CD8-positive, alpha-beta T cell (primary cell): ENCODE measurements at regions of chr3 and their contacts with region 1.

Region 1: GRCh38 chr3:129052675-129053074 is 7.9 kb upstream of the GP9 start:
- DNase-seq: no peak
- ATAC-seq: no peak
- H3K4me3 ChIP-seq: no peak overlapping the region
- H3K4me3 Mint-ChIP-seq: no peak overlapping the region
- H3K27ac ChIP-seq: no peak overlapping the region
- H3K27ac Mint-ChIP-seq: no peak overlapping the region
- H3K4me1 ChIP-seq: peaks cover 4% of the 10 kb centered on the region
- H3K4me1 Mint-ChIP-seq: peaks cover 10% of the 10 kb centered on the region
- H3K27me3 ChIP-seq: no peaks in the 10 kb centered on the region
- H3K27me3 Mint-ChIP-seq: no peaks in the 10 kb centered on the region
- CTCF ChIP-seq: no peak

Region 2: GRCh38 chr3:128922804-128923459 is 129.7 kb before region 1 on chr3:
- CTCF ChIA-PET with region 1: no interaction called
- POLR2A ChIA-PET with region 1: no interaction called
- intact Hi-C with region 1: no loop called
- DNase-seq: peak; percentile 16 to 83 (median 58)
- ATAC-seq: peak; percentile 85
- H3K4me3 ChIP-seq: peak overlapping the region; percentile 34 to 37
- H3K4me3 Mint-ChIP-seq: peak overlapping the region; percentile 84
- H3K27ac ChIP-seq: peak overlapping the region; percentile 34 to 52
- H3K27ac Mint-ChIP-seq: peak overlapping the region; percentile 90
- H3K4me1 ChIP-seq: peaks cover 19% of the 10 kb centered on the region
- H3K4me1 Mint-ChIP-seq: peaks cover 36% of the 10 kb centered on the region
- H3K27me3 ChIP-seq: no peaks in the 10 kb centered on the region
- H3K27me3 Mint-ChIP-seq: no peaks in the 10 kb centered on the region
- CTCF ChIP-seq: no peak

Region 3: DNA sequence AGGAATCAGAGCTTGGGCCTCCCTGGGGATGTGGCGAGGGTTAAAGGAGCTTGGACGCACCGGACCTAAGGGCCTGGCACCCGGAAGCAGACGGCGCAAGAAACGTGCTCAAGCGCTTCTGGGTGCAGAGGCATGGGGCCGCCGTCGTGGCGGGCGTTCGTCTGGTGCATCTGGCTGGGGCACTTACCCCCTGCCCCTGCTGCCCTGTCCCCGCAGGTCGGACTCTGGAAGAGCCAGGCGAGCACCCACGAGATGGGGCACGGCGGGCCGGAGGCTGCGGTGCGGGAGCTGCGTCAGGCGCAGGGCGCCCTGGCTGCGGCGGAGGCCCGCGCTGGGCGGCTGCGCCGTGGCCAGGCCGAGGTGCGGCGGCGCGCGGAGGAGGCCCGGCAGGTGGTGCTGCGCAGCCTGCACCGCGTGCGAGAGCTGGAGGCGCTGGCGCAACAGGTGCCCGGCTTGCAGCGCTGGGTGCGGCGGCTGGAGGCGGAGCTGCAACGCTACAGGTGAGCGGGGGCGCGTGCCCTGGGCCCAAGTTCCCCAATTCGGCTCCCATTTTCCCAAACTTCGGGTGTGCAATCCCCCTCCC is 49.0 kb before region 1 on chr3:
- CTCF ChIA-PET with region 1: interaction called, 23 read pairs
- POLR2A ChIA-PET with region 1: no interaction called
- intact Hi-C with region 1: no loop called
- DNase-seq: peak in 8 of 9 experiments; percentile 38 to 82 (median 60)
- ATAC-seq: peak; percentile 92
- H3K4me3 ChIP-seq: peak overlapping the region in 1 of 2 experiments; percentile 12
- H3K4me3 Mint-ChIP-seq: peak overlapping the region; percentile 70
- H3K27ac ChIP-seq: no peak overlapping the region
- H3K27ac Mint-ChIP-seq: no peak overlapping the region
- H3K4me1 ChIP-seq: peaks cover 43% of the 10 kb centered on the region
- H3K4me1 Mint-ChIP-seq: peaks cover 43% of the 10 kb centered on the region
- H3K27me3 ChIP-seq: peaks cover 5 to 23% of the 10 kb centered on the region in 2 experiments
- H3K27me3 Mint-ChIP-seq: peaks cover 21% of the 10 kb centered on the region
- CTCF ChIP-seq: peak; percentile 34

Region 4: DNA sequence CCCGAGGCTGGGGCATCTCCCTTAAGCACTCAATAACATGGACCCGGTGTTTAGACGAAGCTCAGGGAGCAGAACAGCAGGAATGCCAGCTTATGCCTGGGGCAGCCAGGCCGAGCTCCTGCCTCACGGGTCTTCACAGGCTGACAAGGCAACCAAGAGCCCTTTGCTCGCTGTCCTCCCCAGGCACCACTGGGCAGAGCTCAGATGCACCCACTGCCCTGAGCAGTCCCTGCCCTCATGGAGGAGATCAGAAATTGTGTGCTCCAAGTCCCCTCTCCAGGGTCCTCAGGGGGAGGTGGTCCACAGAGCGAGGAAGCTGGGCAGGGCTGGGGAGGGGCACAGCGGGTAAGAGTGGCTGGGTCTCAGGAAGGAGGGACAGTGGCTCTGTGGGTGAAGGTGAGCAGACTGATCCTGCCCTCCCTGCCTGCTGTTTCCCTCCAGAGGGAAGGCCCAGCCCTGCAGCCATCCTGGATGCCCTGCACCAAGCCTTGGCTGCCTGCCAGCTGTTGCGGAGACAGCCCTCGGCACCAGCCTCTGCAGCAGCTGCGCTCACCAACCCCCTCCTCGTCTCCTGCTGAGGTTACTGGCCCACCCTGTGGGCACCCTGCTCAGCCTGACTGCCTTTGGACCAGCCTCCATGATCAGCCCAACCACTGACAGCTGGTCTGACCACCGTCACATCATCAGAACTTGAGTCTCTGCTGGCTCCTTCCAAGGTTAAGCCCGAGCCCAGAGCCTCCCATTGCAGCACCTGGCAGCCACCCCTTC is 13.2 kb before region 1 on chr3:
- CTCF ChIA-PET with region 1: interaction called, 26 read pairs
- POLR2A ChIA-PET with region 1: no interaction called
- intact Hi-C with region 1: no loop called
- DNase-seq: peak in 1 of 9 experiments; percentile 45
- ATAC-seq: no peak
- H3K4me3 ChIP-seq: no peak overlapping the region
- H3K4me3 Mint-ChIP-seq: no peak overlapping the region
- H3K27ac ChIP-seq: no peak overlapping the region
- H3K27ac Mint-ChIP-seq: no peak overlapping the region
- H3K4me1 ChIP-seq: peaks cover 23% of the 10 kb centered on the region
- H3K4me1 Mint-ChIP-seq: peaks cover 21% of the 10 kb centered on the region
- H3K27me3 ChIP-seq: peaks cover 0 to 4% of the 10 kb centered on the region in 2 experiments
- H3K27me3 Mint-ChIP-seq: peaks cover 13% of the 10 kb centered on the region
- CTCF ChIP-seq: no peak

Region 5: DNA sequence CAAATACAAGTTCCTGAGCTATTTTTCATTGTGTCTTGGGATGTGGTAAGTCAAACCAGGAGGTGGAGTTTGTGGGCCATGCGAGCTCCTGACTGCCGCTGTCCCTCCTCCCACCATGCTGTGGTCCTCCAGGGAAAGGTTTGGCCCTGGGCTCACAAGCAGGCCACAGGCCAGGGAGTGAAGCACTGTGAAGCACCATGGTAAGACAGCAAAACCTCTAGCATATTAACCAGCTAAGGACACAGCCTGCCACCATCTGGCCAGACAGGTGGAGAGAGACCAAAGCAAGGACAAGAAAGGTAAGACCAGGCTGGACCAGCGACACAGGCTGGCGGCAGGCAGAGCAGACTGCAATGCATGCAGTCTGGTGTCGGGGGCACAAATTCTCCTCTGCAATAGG is 53.7 kb after region 1 on chr3:
- CTCF ChIA-PET with region 1: interaction called, 12 read pairs
- POLR2A ChIA-PET with region 1: interaction called, 3 read pairs
- intact Hi-C with region 1: no loop called
- DNase-seq: peak in 1 of 9 experiments; percentile 5
- ATAC-seq: no peak
- H3K4me3 ChIP-seq: no peak overlapping the region
- H3K4me3 Mint-ChIP-seq: no peak overlapping the region
- H3K27ac ChIP-seq: no peak overlapping the region
- H3K27ac Mint-ChIP-seq: peak overlapping the region; percentile 82
- H3K4me1 ChIP-seq: peaks cover 76% of the 10 kb centered on the region
- H3K4me1 Mint-ChIP-seq: peaks cover 80% of the 10 kb centered on the region
- H3K27me3 ChIP-seq: no peaks in the 10 kb centered on the region
- H3K27me3 Mint-ChIP-seq: no peaks in the 10 kb centered on the region
- CTCF ChIP-seq: no peak

Region 6: GRCh38 chr3:129160891-129161859 is 108.5 kb after region 1 on chr3 and contains the start of gene ISY1:
- CTCF ChIA-PET with region 1: interaction called, 14 read pairs
- POLR2A ChIA-PET with region 1: interaction called, 6 read pairs
- intact Hi-C with region 1: loop called in 1 of 2 experiments (anchors 1 kb)
- DNase-seq: peak; percentile 71 to 97 (median 86)
- ATAC-seq: peak; percentile 80
- H3K4me3 ChIP-seq: peak within 1 kb of the TSS; percentile 84 to 94
- H3K4me3 Mint-ChIP-seq: peak within 1 kb of the TSS; percentile 95
- H3K27ac ChIP-seq: peak within 1 kb of the TSS; percentile 92 to 99
- H3K27ac Mint-ChIP-seq: peak within 1 kb of the TSS; percentile 96
- H3K4me1 ChIP-seq: peaks cover 18% of the 10 kb centered on the region
- H3K4me1 Mint-ChIP-seq: peaks cover 43% of the 10 kb centered on the region
- H3K27me3 ChIP-seq: no peaks in the 10 kb centered on the region
- H3K27me3 Mint-ChIP-seq: no peaks in the 10 kb centered on the region
- CTCF ChIP-seq: peak; percentile 70
- total RNA-seq, gene ISY1: 35.2 to 38.7 TPM

Region 7: DNA sequence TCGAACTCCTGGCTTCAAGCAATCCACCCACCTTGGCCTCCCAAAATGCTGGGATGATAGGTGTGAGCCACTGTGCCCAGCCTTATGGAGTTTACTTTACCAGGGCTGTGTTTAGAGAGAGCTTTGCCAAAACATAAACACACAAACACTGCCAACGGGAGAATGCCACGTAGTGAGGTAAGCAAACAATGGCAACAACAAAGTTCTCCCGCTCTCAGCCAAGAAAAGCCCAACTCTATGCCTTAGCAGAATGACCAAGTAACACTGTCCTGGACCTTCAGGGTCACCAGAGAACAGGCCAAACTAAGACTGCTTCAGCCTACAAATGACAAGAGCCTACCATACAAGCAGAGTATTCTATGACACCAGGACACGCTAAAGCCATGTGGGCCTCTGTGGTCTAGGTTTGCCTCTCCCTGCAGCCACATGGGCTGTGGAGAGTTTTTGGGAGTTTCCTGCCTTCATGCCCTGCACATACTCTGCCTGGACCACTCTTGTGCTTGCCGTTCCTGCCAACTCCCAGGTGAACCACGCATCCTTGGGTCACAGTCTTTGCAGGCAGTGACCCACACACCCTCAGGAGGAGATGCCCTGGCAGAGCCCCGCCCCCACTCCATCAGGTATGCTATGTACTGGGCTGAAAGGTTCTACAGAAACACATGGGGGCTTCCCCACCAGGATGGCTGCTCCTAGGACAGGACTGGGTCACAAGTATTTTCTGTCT is 152.6 kb after region 1 on chr3:
- CTCF ChIA-PET with region 1: no interaction called
- POLR2A ChIA-PET with region 1: no interaction called
- intact Hi-C with region 1: no loop called
- DNase-seq: no peak
- ATAC-seq: no peak
- H3K4me3 ChIP-seq: no peak overlapping the region
- H3K4me3 Mint-ChIP-seq: no peak overlapping the region
- H3K27ac ChIP-seq: no peak overlapping the region
- H3K27ac Mint-ChIP-seq: no peak overlapping the region
- H3K4me1 ChIP-seq: no peaks in the 10 kb centered on the region
- H3K4me1 Mint-ChIP-seq: no peaks in the 10 kb centered on the region
- H3K27me3 ChIP-seq: no peaks in the 10 kb centered on the region
- H3K27me3 Mint-ChIP-seq: peaks cover 2% of the 10 kb centered on the region
- CTCF ChIP-seq: no peak

Region 8: DNA sequence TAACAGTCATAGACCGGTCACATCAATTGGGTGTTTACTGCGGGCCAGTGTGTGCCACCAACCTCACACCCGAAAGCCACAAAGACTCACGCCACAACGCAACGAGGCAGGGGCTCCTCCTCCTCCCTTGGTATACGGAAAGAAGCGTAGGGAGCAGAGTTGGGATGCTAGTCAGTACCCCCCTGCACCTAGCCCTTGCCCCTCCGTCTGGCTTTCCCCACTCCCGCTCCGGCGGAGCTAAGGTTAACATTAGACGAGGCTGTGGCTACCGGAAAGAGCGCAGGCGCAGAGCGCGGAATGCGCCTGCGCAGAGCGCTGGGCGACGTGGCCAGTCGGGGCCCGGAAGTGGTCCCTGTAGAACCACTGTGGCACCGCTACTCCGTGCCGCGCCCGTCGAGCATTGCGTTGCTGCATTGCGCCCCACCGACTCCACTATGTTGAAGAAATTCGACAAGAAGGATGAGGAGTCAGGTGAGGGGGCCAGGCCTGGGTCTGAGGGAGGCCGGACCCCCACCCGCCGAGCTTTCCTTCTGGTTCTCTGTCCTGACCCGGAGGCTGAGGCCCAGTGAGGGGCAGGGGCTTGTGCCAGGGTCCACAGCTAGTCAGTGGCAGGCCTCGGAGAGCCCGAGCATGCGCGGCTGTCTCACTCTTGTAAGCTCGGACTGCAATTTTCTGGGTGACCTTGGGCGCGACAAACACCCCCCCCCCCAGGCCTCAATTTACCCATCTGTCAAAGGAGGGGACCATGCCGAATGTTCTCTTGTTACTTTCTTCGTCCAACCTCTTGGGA is 196.8 kb after region 1 on chr3 and contains the start of gene COPG1:
- CTCF ChIA-PET with region 1: interaction called, 105 read pairs
- POLR2A ChIA-PET with region 1: interaction called, 19 read pairs
- intact Hi-C with region 1: loop called (anchors 1 kb)
- DNase-seq: peak; percentile 72 to 95 (median 85)
- ATAC-seq: peak; percentile 83
- H3K4me3 ChIP-seq: peak within 1 kb of the TSS; percentile 80 to 87
- H3K4me3 Mint-ChIP-seq: peak within 1 kb of the TSS; percentile 96
- H3K27ac ChIP-seq: peak within 1 kb of the TSS; percentile 83 to 89
- H3K27ac Mint-ChIP-seq: peak within 1 kb of the TSS; percentile 96
- H3K4me1 ChIP-seq: peaks cover 31% of the 10 kb centered on the region
- H3K4me1 Mint-ChIP-seq: peaks cover 49% of the 10 kb centered on the region
- H3K27me3 ChIP-seq: no peaks in the 10 kb centered on the region
- H3K27me3 Mint-ChIP-seq: no peaks in the 10 kb centered on the region
- CTCF ChIP-seq: no peak
- total RNA-seq, gene COPG1: 77.0 to 93.5 TPM